ENCODE measurements at regions of chr10 and their contacts with region 1.

Region 1: DNA sequence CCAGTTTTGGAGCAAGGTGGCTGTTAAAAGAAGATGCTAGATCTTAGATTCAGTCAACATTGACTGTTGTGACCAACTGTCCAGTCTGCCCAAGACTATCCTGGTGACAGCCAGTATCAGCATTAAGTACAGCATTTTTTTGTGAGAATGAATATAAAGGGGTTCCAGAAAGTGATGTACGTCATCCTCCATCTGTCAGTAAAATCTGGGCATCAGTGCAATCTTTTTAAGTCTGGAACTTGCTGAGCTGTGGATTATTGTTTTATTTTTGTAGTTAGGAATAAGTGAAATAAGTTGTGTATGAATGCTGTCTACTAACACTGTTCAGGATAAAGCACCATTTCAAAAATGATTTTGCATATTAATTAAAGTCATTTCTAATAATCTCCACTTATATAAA is 1020.0 kb upstream of the GHITM start:
- DNase-seq: no peak
- H3K4me3 ChIP-seq: no peak overlapping the region
- CTCF ChIP-seq: no peak
- POLR2A ChIP-seq: no peak

Region 2: DNA sequence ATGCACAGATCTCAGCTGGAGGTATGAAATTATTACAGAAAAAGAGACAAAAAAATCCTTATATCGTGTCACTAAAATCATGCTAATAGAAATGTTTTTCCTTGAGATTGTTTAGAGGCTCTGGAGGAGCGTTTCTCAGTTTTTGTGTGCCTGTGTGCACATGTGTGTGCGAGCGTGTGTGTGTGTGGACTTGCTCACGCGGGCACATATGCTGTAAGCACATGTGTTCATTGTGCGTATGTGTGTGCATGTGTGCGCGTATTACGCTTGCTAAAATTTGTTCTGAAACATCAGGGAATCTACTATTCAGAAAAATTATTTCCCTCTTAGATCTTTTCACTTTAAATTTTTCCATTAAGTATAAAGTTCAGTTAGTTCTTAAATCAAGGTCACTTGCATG is 133.1 kb before region 1 on chr10:
- intact Hi-C with region 1: no loop called
- DNase-seq: no peak
- H3K4me3 ChIP-seq: no peak overlapping the region
- CTCF ChIP-seq: no peak
- POLR2A ChIP-seq: no peak

Region 3: GRCh38 chr10:83045731-83046130 is 73.6 kb before region 1 on chr10:
- intact Hi-C with region 1: no loop called
- DNase-seq: no peak
- H3K4me3 ChIP-seq: no peak overlapping the region
- CTCF ChIP-seq: no peak
- POLR2A ChIP-seq: no peak

Region 4: GRCh38 chr10:84715911-84716310 is 1596.6 kb after region 1 on chr10:
- intact Hi-C with region 1: loop called (anchors 10 kb)
- DNase-seq: no peak
- H3K4me3 ChIP-seq: no peak overlapping the region
- CTCF ChIP-seq: no peak
- POLR2A ChIP-seq: no peak